K562 (cell line): ENCODE measurements at regions of chr1 and their contacts with region 1.

Region 1: GRCh38 chr1:100360790-100361510 is 8.6 kb downstream of the CDC14A start:
- DNase-seq: peak in 2 of 4 experiments; percentile 42 to 66
- ATAC-seq: peak; percentile 1; the same call in 1 of the 3 replicates
- H3K4me3 ChIP-seq: no peak overlapping the region
- H3K27ac ChIP-seq: peak overlapping the region; percentile 61
- H3K4me1 ChIP-seq: peaks cover 8 to 41% of the 10 kb centered on the region in 2 experiments
- H3K27me3 ChIP-seq: no peaks in the 10 kb centered on the region
- CTCF ChIP-seq: no peak
- EP300 ChIP-seq: no peak
- POLR2A ChIP-seq: no peak
- RAD21 ChIP-seq: no peak

Region 2: GRCh38 chr1:100249537-100250257 is 111.3 kb before region 1 on chr1 and contains the start of gene DBT:
- CTCF ChIA-PET with region 1: no interaction called
- POLR2A ChIA-PET with region 1: interaction called, 25 read pairs
- in situ Hi-C with region 1: no loop called
- intact Hi-C with region 1: loop called (anchors 10 kb)
- DNase-seq: peak; percentile 98 to 100 (median 100)
- ATAC-seq: peak; percentile 98
- H3K4me3 ChIP-seq: peak within 1 kb of the TSS; percentile 68
- H3K27ac ChIP-seq: peak within 1 kb of the TSS; percentile 83
- H3K4me1 ChIP-seq: peaks cover 4 to 21% of the 10 kb centered on the region in 2 experiments; a peak in 4 of 5 replicates
- H3K27me3 ChIP-seq: no peaks in the 10 kb centered on the region
- CTCF ChIP-seq: no peak
- EP300 ChIP-seq: peak; percentile 49
- POLR2A ChIP-seq: peak; percentile 98
- RAD21 ChIP-seq: 0 out of 4 replicates have a peak, but pooled peaks of 1 of the 2 experiments have one; percentile 7
- polyA plus RNA-seq, gene DBT: 2.7 to 3.3 TPM

Region 3: GRCh38 chr1:100378956-100379355 is 18.0 kb after region 1 on chr1:
- CTCF ChIA-PET with region 1: interaction called, 3 read pairs
- POLR2A ChIA-PET with region 1: interaction called, 37 read pairs
- in situ Hi-C with region 1: no loop called
- intact Hi-C with region 1: no loop called
- DNase-seq: no peak
- ATAC-seq: no peak
- H3K4me3 ChIP-seq: no peak overlapping the region
- H3K27ac ChIP-seq: no peak overlapping the region
- H3K4me1 ChIP-seq: no peaks in the 10 kb centered on the region; a peak in 1 of 5 replicates
- H3K27me3 ChIP-seq: no peaks in the 10 kb centered on the region
- CTCF ChIP-seq: no peak
- EP300 ChIP-seq: no peak
- POLR2A ChIP-seq: no peak
- RAD21 ChIP-seq: no peak

Region 4: GRCh38 chr1:100387209-100387608 is 26.3 kb after region 1 on chr1:
- CTCF ChIA-PET with region 1: no interaction called
- POLR2A ChIA-PET with region 1: interaction called, 37 read pairs
- in situ Hi-C with region 1: no loop called
- intact Hi-C with region 1: no loop called
- DNase-seq: no peak
- ATAC-seq: no peak
- H3K4me3 ChIP-seq: no peak overlapping the region
- H3K27ac ChIP-seq: no peak overlapping the region
- H3K4me1 ChIP-seq: peaks cover 5 to 7% of the 10 kb centered on the region in 2 experiments; a peak in 2 of 5 replicates
- H3K27me3 ChIP-seq: no peaks in the 10 kb centered on the region
- CTCF ChIP-seq: no peak
- EP300 ChIP-seq: no peak
- POLR2A ChIP-seq: no peak
- RAD21 ChIP-seq: no peak